HEK293 (cell line): ENCODE measurements at regions of chr5 and their contacts with region 1.

Region 1: GRCh38 chr5:175696139-175696854 is 38.4 kb downstream of the HRH2 start:
- H3K4me3 ChIP-seq: no peak overlapping the region
- H3K27ac ChIP-seq: no peak overlapping the region; the same call in 1 of the 2 replicates
- H3K4me1 ChIP-seq: no peaks in the 10 kb centered on the region
- CTCF ChIP-seq: peak; percentile 49; the same call in 1 of the 2 replicates

Region 2: GRCh38 chr5:175709276-175709781 is 13.0 kb after region 1 on chr5:
- CTCF ChIA-PET with region 1: interaction called, 22 read pairs
- POLR2A ChIA-PET with region 1: no interaction called
- H3K4me3 ChIP-seq: no peak overlapping the region
- H3K27ac ChIP-seq: no peak overlapping the region
- H3K4me1 ChIP-seq: no peaks in the 10 kb centered on the region
- CTCF ChIP-seq: no peak

Region 3: DNA sequence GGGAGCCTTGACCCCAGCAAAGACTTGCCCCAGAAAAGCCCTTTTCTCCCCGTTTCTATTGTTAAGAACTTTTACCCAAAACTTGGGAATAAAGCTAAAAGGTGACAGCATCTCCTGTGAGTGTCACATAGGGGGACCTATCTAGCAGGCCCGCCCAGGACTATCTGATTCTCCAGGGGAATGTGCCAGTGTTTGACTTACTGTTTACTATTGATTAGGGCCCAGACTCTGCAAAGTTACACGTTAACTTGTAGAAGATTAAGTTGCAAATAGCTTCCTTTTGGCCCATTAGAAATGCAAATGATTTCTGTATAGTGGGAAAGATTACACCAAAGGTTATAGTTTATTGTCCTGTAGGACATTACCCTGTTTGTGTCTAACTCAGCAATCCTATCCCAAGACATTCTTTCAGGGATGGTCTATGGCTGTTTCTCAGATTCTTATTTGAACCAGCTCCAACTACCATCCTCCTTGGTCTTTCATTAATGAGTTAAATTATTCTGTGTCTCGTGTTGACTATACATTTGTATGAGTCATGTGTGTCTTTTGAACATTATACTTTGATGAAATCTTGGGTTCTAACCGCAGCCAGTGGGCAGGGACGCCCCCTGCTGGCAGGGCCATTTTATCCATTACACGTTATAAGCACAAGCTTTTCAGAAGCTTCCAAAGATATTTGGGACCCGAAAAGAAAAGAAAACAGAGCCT is 22.3 kb after region 1 on chr5:
- CTCF ChIA-PET with region 1: interaction called, 22 read pairs
- POLR2A ChIA-PET with region 1: no interaction called
- H3K4me3 ChIP-seq: no peak overlapping the region
- H3K27ac ChIP-seq: no peak overlapping the region
- H3K4me1 ChIP-seq: no peaks in the 10 kb centered on the region
- CTCF ChIP-seq: no peak

Region 4: DNA sequence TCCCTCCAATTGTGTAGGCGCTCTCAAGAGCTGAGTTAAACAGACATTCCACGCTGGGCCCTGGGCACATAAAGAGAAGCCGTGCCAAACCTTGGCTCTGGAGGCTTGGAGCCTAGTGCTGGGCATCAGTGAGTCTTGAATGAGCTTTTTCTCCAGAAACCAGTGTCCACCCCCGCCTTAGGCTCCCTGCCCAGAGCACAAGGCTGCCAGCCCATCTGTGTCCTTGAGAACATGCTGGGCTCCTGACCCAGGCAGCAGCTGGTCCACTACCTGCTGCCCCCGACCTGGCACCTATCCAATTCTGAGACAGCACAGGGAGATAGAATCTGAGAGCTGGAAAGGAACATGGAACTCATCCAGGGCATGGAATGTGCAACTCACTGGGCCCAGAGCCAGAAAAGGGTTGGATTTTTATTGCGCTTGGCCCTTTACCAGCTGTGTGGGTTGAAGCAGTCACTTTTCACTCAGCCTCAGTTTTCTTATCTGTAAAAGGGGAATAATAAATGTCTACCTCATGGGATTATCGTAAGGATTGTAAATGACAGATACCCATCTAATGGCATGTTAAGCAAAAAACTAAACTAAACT is 82.7 kb after region 1 on chr5:
- CTCF ChIA-PET with region 1: no interaction called
- POLR2A ChIA-PET with region 1: no interaction called
- H3K4me3 ChIP-seq: no peak overlapping the region
- H3K27ac ChIP-seq: no peak overlapping the region
- H3K4me1 ChIP-seq: no peaks in the 10 kb centered on the region
- CTCF ChIP-seq: no peak